GM12878 (cell line): ENCODE measurements at regions of chr3 and their contacts with region 1.

Region 1: DNA sequence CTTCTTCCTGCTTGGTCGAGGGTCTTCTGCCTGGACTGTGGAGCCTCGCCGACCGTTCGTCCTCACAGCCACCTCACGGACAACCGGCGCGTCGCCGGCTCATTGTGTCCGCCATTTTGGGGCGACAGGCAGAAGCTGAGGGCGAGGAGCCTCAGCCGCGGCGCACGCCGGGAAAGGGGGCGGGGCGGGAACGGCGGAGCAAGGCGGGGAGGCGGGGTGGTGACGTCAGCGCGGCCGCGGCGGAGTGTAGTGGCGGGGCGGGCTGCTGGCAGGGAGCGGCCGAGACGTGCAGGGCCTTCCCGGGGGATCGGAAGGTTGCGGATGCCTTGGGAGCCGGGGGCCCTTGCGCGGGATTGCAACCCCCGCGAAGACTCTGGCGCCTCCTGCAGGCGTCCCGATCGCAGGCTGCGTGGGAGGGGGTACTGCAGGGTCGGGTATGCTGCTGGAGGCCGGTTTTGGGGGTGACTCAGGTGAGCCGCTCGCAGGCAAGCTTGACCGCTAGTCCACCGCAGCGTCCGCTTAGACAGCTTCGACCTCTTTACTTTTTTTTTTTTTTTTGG is at the start of gene WDR82:
- DNase-seq: peak; percentile 67
- ATAC-seq: peak; percentile 84
- H3K4me3 ChIP-seq: peak within 1 kb of the TSS; percentile 91
- H3K27ac ChIP-seq: peak within 1 kb of the TSS; percentile 82
- H3K4me1 ChIP-seq: no peaks in the 10 kb centered on the region; the same call in 1 of the 2 replicates
- H3K27me3 ChIP-seq: no peaks in the 10 kb centered on the region
- CTCF ChIP-seq: peak; percentile 33 to 46 (median 43); a peak in 5 of 6 replicates
- EP300 ChIP-seq: no peak
- POLR2A ChIP-seq: peak; percentile 100
- RAD21 ChIP-seq: peak; percentile 37
- polyA plus RNA-seq, gene WDR82: 10.4 to 12.5 TPM

Region 2: DNA sequence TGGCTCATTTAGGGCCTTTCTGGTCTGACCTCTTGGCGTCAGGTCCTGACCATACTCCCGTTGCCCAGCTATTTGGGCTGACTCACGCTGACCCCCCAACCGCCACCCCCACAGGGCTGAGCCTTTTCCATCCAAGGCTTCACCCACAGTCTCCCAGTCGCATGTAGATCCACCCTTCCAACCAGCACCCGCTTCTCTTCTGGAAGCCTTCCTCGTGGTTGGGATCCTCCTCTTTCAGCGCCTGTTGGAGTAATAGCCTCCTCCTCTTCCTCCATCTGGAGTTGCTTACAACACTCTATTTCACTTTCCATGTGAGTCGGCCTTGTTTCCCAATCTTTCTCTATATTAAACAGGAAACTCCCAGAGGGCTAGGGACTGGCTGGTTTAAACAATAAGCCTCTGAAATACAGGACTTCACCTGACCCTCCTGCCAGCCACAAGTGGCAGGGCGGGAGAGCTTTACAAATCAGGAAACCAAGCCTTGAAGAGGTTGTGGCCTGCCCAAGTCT is 82.7 kb before region 1 on chr3:
- CTCF ChIA-PET with region 1: no interaction called
- POLR2A ChIA-PET with region 1: no interaction called
- RAD21 ChIA-PET with region 1: no interaction called
- SMC1A ChIA-PET with region 1: no interaction called
- in situ Hi-C with region 1: no loop called
- intact Hi-C with region 1: no loop called
- DNase-seq: no peak
- ATAC-seq: no peak
- H3K4me3 ChIP-seq: no peak overlapping the region
- H3K27ac ChIP-seq: no peak overlapping the region
- H3K4me1 ChIP-seq: peaks cover 25% of the 10 kb centered on the region
- H3K27me3 ChIP-seq: no peaks in the 10 kb centered on the region
- CTCF ChIP-seq: no peak
- EP300 ChIP-seq: no peak
- POLR2A ChIP-seq: no peak
- RAD21 ChIP-seq: no peak

Region 3: DNA sequence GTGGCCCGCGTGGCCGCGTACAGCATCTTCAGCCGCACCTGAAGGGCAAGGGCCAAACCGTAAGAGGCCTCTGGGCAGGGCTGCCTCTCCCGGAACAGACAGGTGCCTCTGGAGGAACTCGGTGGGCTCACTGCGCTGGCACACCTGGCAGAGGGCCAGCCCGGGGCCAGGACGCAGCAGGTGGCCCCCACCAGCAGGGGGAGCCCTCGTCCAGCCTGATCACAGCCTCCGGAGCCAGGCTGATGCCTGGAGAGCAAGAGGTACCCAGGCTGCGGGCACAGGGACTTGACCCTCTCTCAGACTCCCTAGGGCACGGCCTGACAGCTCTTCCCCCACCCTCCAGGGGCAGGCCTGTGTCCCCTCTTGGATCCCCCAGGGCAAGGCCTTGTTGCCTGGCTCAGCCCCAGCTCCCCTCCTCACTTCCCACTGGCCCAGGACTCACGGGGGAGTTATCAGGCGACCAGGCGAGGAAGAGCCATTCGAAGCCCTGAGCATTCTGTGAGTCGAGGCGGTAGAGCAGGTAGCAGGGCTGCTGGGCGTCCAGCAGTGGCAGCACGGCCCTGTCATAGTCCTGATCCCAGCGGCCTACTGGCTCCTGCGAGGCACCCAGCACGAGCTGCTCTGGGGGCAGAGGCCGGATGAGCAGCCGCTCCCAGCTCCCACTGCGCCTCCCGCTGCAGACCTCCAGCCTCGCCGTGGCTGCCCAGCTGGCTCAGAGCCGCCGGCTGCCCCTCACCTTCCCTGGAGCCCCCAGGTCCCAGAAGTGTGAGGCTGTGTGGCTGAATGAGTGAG is 46.9 kb before region 1 on chr3:
- CTCF ChIA-PET with region 1: interaction called, 68 read pairs
- POLR2A ChIA-PET with region 1: interaction called, 34 read pairs
- RAD21 ChIA-PET with region 1: interaction called, 19 read pairs
- SMC1A ChIA-PET with region 1: interaction called, 14 read pairs
- in situ Hi-C with region 1: no loop called
- intact Hi-C with region 1: no loop called
- DNase-seq: no peak
- ATAC-seq: peak; percentile 92
- H3K4me3 ChIP-seq: no peak overlapping the region
- H3K27ac ChIP-seq: no peak overlapping the region
- H3K4me1 ChIP-seq: peaks cover 9% of the 10 kb centered on the region
- H3K27me3 ChIP-seq: no peaks in the 10 kb centered on the region
- CTCF ChIP-seq: peak; percentile 92 to 98 (median 95)
- EP300 ChIP-seq: no peak
- POLR2A ChIP-seq: no peak
- RAD21 ChIP-seq: peak; percentile 78

Region 4: GRCh38 chr3:52245322-52246263 is 33.0 kb before region 1 on chr3 and contains the start of gene PPM1M:
- CTCF ChIA-PET with region 1: interaction called, 87 read pairs
- POLR2A ChIA-PET with region 1: interaction called, 60 read pairs
- RAD21 ChIA-PET with region 1: interaction called, 36 read pairs
- SMC1A ChIA-PET with region 1: interaction called, 62 read pairs
- in situ Hi-C with region 1: no loop called
- intact Hi-C with region 1: loop called (anchors 2 kb)
- DNase-seq: no peak
- ATAC-seq: peak; percentile 10
- H3K4me3 ChIP-seq: peak within 1 kb of the TSS; percentile 89
- H3K27ac ChIP-seq: peak within 1 kb of the TSS; percentile 67
- H3K4me1 ChIP-seq: peaks cover 49% of the 10 kb centered on the region
- H3K27me3 ChIP-seq: no peaks in the 10 kb centered on the region
- CTCF ChIP-seq: no peak
- EP300 ChIP-seq: no peak
- POLR2A ChIP-seq: peak; percentile 48
- RAD21 ChIP-seq: no peak
- polyA plus RNA-seq, gene PPM1M: 7.5 to 15.3 TPM

Region 5: DNA sequence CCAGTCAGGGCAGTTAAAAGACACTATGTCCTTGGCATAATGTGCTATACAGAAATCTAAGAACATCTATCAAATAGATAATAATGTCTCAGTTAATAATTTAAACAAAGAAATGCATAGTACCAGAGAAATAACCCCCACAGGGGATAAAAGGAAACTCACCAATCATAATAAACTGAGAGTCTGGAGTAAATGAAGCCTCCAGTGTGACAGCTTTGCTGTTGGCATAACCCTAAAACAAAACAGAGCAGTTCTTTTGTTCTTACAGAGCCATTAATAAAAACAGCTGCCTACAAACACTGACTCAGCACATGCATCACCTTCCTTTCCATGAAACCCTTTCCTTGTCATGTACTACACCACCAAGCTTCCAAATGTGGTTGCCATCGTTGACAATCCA is 19.6 kb before region 1 on chr3:
- CTCF ChIA-PET with region 1: interaction called, 20 read pairs
- POLR2A ChIA-PET with region 1: interaction called, 60 read pairs
- RAD21 ChIA-PET with region 1: interaction called, 3 read pairs
- SMC1A ChIA-PET with region 1: interaction called, 30 read pairs
- in situ Hi-C with region 1: no loop called
- intact Hi-C with region 1: no loop called
- DNase-seq: no peak
- ATAC-seq: no peak
- H3K4me3 ChIP-seq: no peak overlapping the region
- H3K27ac ChIP-seq: no peak overlapping the region
- H3K4me1 ChIP-seq: peaks cover 10% of the 10 kb centered on the region
- H3K27me3 ChIP-seq: no peaks in the 10 kb centered on the region
- CTCF ChIP-seq: no peak
- EP300 ChIP-seq: no peak
- POLR2A ChIP-seq: no peak
- RAD21 ChIP-seq: no peak

Region 6: GRCh38 chr3:52385157-52385556 is 106.6 kb after region 1 on chr3:
- CTCF ChIA-PET with region 1: no interaction called
- POLR2A ChIA-PET with region 1: no interaction called
- RAD21 ChIA-PET with region 1: no interaction called
- SMC1A ChIA-PET with region 1: no interaction called
- in situ Hi-C with region 1: no loop called
- intact Hi-C with region 1: no loop called
- DNase-seq: no peak
- ATAC-seq: peak; percentile 90
- H3K4me3 ChIP-seq: no peak overlapping the region
- H3K27ac ChIP-seq: no peak overlapping the region
- H3K4me1 ChIP-seq: no peaks in the 10 kb centered on the region; the same call in 1 of the 2 replicates
- H3K27me3 ChIP-seq: no peaks in the 10 kb centered on the region
- CTCF ChIP-seq: peak; percentile 59 to 73 (median 72)
- EP300 ChIP-seq: no peak
- POLR2A ChIP-seq: no peak
- RAD21 ChIP-seq: peak; percentile 55